ENCODE measurements at regions of chr20 and their contacts with region 1.

Region 1: DNA sequence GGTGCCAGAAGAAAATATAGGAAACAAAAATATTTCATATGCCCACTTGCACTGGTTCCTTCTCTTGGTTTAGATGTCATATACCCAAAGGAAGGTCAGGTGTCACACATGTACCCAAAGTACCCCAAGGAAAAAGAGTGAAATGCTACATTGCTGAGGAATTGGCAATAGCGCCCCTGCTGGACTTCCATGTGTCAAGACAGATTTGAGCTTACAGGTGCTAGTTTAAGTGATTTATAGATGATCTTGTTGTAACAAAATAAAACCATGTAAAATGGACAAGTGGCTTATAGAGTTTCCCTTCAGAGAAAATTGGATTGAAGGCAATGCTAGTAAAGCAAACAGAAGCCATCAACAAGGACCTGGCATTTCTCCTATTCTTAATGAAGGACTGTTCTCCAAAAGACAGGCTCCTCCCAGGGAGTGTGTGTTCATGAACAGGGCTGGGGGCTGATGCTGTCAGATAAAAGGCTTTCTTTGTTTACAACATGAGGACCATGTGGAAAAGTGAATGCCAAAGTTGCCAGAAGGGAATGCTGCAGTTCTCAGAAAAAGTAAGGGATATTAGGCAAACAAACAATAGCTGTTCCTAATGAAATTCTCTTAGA is 64.3 kb upstream of the PAK5 start:
- DNase-seq: no peak

Region 2: DNA sequence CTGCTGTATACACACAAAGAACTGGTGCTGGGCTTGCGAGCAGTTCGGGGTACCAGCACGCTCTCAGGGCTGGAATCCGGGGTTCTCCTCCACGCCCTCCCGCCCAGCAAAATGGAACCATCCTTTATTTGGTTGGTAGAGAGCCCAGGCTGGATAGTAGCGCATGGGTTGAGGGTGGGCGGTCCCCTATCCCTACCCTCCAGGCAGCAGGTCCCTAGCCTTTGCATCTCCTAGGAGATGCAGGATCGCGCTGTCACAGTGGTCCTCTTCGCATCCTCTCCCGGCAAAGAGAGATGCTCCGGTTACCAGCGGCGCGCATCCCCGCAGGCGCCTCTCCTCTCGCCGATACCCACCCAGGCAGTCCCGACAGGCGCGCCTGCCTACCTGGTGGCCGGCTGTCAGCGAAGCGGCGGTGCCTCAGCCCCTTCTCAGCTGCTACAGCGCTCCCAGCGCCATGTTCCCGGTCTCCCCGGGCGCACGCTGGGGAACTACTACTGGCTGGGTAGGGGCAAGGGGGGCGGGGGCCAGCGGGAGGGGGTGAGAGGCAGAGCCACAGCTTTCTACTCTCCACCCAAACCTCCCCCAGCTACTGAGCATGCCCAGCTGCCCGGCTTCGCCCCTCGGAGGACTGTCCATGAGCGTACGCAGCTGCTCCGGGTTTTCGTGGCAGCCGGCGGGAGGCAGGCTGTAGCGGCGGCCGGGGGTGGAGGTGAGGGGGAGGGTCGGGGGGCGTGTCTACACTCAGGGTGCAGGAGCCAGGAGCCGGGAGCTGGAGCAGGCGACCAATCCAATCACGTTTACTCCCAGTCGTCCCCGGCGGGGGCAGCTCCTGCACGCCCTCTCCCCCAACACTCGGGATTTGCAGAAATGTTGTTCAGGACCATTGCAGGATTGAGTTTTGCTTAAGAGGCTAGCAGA is 64.5 kb before region 1 on chr20 and contains the start of gene PAK5:
- intact Hi-C with region 1: loop called (anchors 10 kb)
- DNase-seq: no peak
- total RNA-seq, gene PAK5: not detected